ENCODE measurements at regions of chr6 and their contacts with region 1.

Region 1: DNA sequence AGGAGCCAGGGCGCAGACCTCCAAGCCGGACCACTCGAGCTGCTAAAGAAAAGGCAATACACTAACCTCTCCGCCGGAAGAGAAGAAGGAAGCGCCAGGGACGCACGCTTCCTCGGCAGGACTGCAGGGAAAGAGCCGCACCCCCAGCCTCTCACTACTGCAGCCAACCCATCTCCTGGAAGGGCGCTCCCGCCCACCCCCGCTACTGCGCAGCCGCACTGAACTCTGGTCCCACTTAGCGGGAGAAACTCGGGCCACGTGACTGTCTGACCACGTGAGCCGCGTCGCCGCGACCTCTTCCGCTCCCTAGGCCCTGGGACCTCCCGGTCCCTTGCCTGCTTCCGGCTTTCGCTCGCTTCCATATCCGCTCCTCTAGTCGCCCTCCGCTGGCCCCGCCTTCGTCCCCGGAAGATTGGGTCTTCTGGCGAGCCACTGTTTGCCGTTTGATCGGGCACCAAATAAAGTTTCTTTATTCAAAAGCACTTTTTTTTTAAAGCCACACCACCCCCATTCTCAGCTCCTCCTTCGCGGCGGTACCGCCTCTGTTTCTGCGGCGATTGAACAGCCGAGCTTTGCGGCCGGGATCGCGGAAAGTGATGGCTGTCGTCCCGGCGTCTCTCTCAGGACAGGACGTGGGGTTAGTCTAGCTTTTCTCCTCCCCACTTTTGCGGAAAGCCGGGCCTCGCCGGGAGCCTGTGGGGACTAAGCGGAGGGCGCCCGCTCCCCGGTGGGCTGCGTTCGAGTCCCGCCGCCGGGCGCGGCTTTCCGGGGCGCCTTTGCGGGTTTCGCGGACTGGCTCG is at the start of gene RMND1:
- DNase-seq: peak; percentile 92 to 99 (median 99)
- ATAC-seq: peak; percentile 98
- H3K4me3 ChIP-seq: peak within 1 kb of the TSS; percentile 90
- H3K4me3 Mint-ChIP-seq: peak within 1 kb of the TSS; percentile 90 to 98 (median 96)
- H3K27ac ChIP-seq: peak within 1 kb of the TSS; percentile 86
- H3K27ac Mint-ChIP-seq: peak within 1 kb of the TSS; percentile 83 to 98 (median 92)
- H3K4me1 ChIP-seq: peaks cover 15 to 20% of the 10 kb centered on the region in 2 donors
- H3K4me1 Mint-ChIP-seq: peaks cover 36 to 68% (median 54%) of the 10 kb centered on the region in 7 donors
- H3K27me3 ChIP-seq: no peaks in the 10 kb centered on the region
- H3K27me3 Mint-ChIP-seq: peaks cover 0 to 5% (median 0%) of the 10 kb centered on the region in 5 donors
- total RNA-seq, gene RMND1: 8.8 to 21.5 (median 18.7) TPM

Region 2: DNA sequence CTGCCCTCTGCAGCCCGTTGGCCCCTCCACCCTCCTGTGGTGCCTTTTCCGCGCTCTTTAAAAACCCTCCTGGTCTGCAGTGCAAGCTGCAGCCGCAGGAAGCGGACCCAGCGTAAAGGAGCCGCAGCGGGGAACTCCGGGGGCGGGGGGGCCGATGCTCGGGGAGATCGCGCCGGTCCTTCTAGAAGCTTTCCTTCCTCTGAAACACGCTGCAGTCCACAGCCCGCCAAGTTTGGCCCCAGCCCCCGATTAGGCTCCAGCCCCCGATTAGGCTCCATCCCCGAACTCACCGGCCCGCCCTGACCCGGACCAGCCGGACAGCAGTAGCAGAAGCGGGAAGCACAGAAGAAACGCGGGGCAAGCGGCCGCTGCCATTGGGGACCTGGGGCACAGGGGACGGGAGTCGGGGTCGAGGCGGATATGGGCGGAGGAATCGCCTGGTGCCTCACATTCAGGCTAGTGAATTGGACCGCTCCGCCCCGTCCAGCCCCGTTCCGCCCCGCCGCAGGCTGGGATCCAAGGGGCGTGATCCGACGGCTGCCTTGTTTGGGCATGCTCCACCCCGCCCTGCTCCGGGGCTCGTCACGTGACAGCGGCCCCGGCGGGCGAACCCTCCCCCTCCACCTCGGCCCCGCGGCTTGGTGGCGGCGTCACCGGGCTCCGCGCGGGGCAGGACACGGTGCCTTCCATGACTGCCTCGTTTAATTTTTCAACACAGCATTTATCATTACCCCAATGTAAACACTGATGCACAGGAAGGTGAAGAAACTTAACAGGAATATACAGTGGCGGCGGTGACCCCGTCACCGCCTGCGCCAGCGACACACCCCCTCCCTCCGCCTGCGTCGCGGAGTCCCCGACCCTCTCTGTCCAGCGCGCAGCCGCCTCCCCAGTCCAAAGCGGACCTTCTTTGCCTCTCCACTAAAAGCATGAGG is 1447.1 kb before region 1 on chr6:
- CTCF ChIA-PET with region 1: no interaction called
- POLR2A ChIA-PET with region 1: no interaction called
- intact Hi-C with region 1: loop called in 1 of 2 experiments (anchors 10 kb)
- DNase-seq: peak; percentile 73 to 91 (median 82)
- ATAC-seq: peak; percentile 89
- H3K4me3 ChIP-seq: peak overlapping the region; percentile 87
- H3K4me3 Mint-ChIP-seq: peak overlapping the region; percentile 78 to 96 (median 91)
- H3K27ac ChIP-seq: peak overlapping the region; percentile 75
- H3K27ac Mint-ChIP-seq: peak overlapping the region; percentile 31 to 95 (median 85)
- H3K4me1 ChIP-seq: peaks cover 13 to 31% of the 10 kb centered on the region in 2 donors
- H3K4me1 Mint-ChIP-seq: peaks cover 7 to 56% (median 20%) of the 10 kb centered on the region in 7 donors
- H3K27me3 ChIP-seq: peaks cover 0 to 3% of the 10 kb centered on the region in 2 donors
- H3K27me3 Mint-ChIP-seq: peaks cover 15 to 35% (median 19%) of the 10 kb centered on the region in 5 donors

Region 3: GRCh38 chr6:151357758-151358436 is 94.3 kb before region 1 on chr6:
- CTCF ChIA-PET with region 1: no interaction called
- POLR2A ChIA-PET with region 1: no interaction called
- intact Hi-C with region 1: no loop called
- DNase-seq: no peak
- ATAC-seq: no peak
- H3K4me3 ChIP-seq: no peak overlapping the region
- H3K4me3 Mint-ChIP-seq: peak overlapping the region in 1 of 10 donors; percentile 11
- H3K27ac ChIP-seq: no peak overlapping the region
- H3K27ac Mint-ChIP-seq: peak overlapping the region in 7 of 9 donors; percentile 4 to 65 (median 49)
- H3K4me1 ChIP-seq: no peaks in the 10 kb centered on the region
- H3K4me1 Mint-ChIP-seq: peaks cover 0 to 13% (median 12%) of the 10 kb centered on the region in 7 donors
- H3K27me3 ChIP-seq: no peaks in the 10 kb centered on the region
- H3K27me3 Mint-ChIP-seq: no peaks in the 10 kb centered on the region

Region 4: DNA sequence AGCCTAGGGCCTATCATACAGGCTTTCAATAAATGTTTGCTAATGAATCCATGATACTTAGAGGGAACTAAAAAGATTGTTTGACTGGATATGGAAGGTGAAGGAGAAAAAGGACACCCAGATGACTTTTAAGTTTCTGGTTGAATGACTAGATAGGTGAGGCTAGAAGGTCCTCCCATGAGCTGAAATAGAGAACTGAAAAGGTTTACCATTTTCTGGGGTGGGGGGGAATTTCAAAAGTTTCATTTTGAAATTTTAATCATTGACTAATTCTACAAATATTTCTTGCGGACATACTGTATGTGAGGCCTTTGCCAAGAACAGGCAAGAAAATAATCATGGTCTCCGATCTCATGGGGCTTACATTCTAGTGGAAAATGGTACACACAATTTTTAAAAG is 42.9 kb before region 1 on chr6:
- CTCF ChIA-PET with region 1: interaction called, 4 read pairs
- POLR2A ChIA-PET with region 1: interaction called, 5 read pairs
- intact Hi-C with region 1: loop called (anchors 1 kb)
- DNase-seq: no peak
- ATAC-seq: no peak
- H3K4me3 ChIP-seq: no peak overlapping the region
- H3K4me3 Mint-ChIP-seq: no peak overlapping the region
- H3K27ac ChIP-seq: no peak overlapping the region
- H3K27ac Mint-ChIP-seq: peak overlapping the region in 7 of 9 donors; percentile 1 to 70 (median 37)
- H3K4me1 ChIP-seq: peaks cover 12 to 14% of the 10 kb centered on the region in 2 donors
- H3K4me1 Mint-ChIP-seq: peaks cover 20 to 38% (median 32%) of the 10 kb centered on the region in 7 donors
- H3K27me3 ChIP-seq: no peaks in the 10 kb centered on the region
- H3K27me3 Mint-ChIP-seq: no peaks in the 10 kb centered on the region

Region 5: GRCh38 chr6:151747896-151748295 is 295.7 kb after region 1 on chr6:
- CTCF ChIA-PET with region 1: no interaction called
- POLR2A ChIA-PET with region 1: no interaction called
- intact Hi-C with region 1: no loop called
- DNase-seq: no peak
- ATAC-seq: no peak
- H3K4me3 ChIP-seq: no peak overlapping the region
- H3K4me3 Mint-ChIP-seq: no peak overlapping the region
- H3K27ac ChIP-seq: no peak overlapping the region
- H3K27ac Mint-ChIP-seq: no peak overlapping the region
- H3K4me1 ChIP-seq: no peaks in the 10 kb centered on the region
- H3K4me1 Mint-ChIP-seq: peaks cover 0 to 2% (median 0%) of the 10 kb centered on the region in 7 donors
- H3K27me3 ChIP-seq: no peaks in the 10 kb centered on the region
- H3K27me3 Mint-ChIP-seq: peaks cover 0 to 16% (median 7%) of the 10 kb centered on the region in 5 donors

Region 6: DNA sequence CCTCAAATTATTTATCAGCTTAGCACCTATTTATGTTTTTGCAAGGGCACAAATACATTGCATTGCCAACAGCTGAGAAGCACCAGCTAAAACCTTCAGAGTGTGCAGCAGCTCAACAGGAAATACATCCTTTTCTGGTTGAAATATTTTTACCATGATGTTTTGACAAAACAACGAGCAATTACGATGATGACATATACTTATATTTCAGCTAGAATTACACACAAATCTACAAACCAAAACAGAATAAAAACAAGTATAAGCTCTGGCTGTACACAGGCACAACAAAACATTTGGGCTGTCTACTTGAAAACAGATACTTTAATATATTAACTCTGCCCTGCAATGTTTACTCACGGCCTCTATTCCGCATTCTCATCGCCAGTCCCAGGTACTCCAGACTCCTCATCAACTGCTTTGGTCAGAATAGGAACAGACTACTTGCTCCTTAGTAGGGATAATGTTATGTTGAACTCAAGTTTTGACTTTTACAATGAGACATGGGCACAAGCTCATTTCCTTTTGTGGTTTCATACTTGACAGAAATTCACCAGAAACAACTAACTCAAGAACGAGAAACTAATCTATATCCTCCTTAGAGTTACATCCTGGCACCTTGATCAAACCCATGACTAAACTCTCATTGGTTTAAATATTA is 732.9 kb after region 1 on chr6:
- CTCF ChIA-PET with region 1: no interaction called
- POLR2A ChIA-PET with region 1: interaction called, 8 read pairs
- intact Hi-C with region 1: loop called (anchors 1 to 10 kb)
- DNase-seq: peak in 7 of 9 donors; percentile 25 to 78 (median 66)
- ATAC-seq: peak; percentile 77
- H3K4me3 ChIP-seq: peak overlapping the region; percentile 56
- H3K4me3 Mint-ChIP-seq: peak overlapping the region; percentile 87 to 99 (median 96)
- H3K27ac ChIP-seq: peak overlapping the region; percentile 71
- H3K27ac Mint-ChIP-seq: peak overlapping the region; percentile 95 to 100 (median 99)
- H3K4me1 ChIP-seq: peaks cover 37 to 48% of the 10 kb centered on the region in 2 donors
- H3K4me1 Mint-ChIP-seq: peaks cover 46 to 92% (median 75%) of the 10 kb centered on the region in 7 donors
- H3K27me3 ChIP-seq: no peaks in the 10 kb centered on the region
- H3K27me3 Mint-ChIP-seq: no peaks in the 10 kb centered on the region

Region 7: GRCh38 chr6:152943260-152943896 is 1491.2 kb after region 1 on chr6:
- CTCF ChIA-PET with region 1: no interaction called
- POLR2A ChIA-PET with region 1: no interaction called
- intact Hi-C with region 1: no loop called
- DNase-seq: no peak
- ATAC-seq: no peak
- H3K4me3 ChIP-seq: no peak overlapping the region
- H3K4me3 Mint-ChIP-seq: no peak overlapping the region
- H3K27ac ChIP-seq: no peak overlapping the region
- H3K27ac Mint-ChIP-seq: no peak overlapping the region
- H3K4me1 ChIP-seq: no peaks in the 10 kb centered on the region
- H3K4me1 Mint-ChIP-seq: peaks cover 0 to 8% (median 6%) of the 10 kb centered on the region in 7 donors
- H3K27me3 ChIP-seq: no peaks in the 10 kb centered on the region
- H3K27me3 Mint-ChIP-seq: peaks cover 16 to 45% (median 20%) of the 10 kb centered on the region in 5 donors

Region 8: GRCh38 chr6:152982768-152983636 is 1530.9 kb after region 1 on chr6 and contains the start of gene FBXO5:
- CTCF ChIA-PET with region 1: no interaction called
- POLR2A ChIA-PET with region 1: no interaction called
- intact Hi-C with region 1: loop called (anchors 2 kb)
- DNase-seq: peak; percentile 94 to 98 (median 96)
- ATAC-seq: peak; percentile 97
- H3K4me3 ChIP-seq: peak within 1 kb of the TSS; percentile 94
- H3K4me3 Mint-ChIP-seq: peak within 1 kb of the TSS; percentile 92 to 100 (median 96)
- H3K27ac ChIP-seq: peak within 1 kb of the TSS; percentile 89
- H3K27ac Mint-ChIP-seq: peak within 1 kb of the TSS; percentile 87 to 99 (median 95)
- H3K4me1 ChIP-seq: peaks cover 10 to 20% of the 10 kb centered on the region in 2 donors
- H3K4me1 Mint-ChIP-seq: peaks cover 33 to 58% (median 43%) of the 10 kb centered on the region in 7 donors
- H3K27me3 ChIP-seq: no peaks in the 10 kb centered on the region
- H3K27me3 Mint-ChIP-seq: no peaks in the 10 kb centered on the region
- total RNA-seq, gene FBXO5: 3.2 to 50.2 (median 9.2) TPM

Measured in naive thymus-derived CD4-positive, alpha-beta T cell (primary cell).